ENCODE measurements at regions of chr5 and their contacts with region 1.

Region 1: DNA sequence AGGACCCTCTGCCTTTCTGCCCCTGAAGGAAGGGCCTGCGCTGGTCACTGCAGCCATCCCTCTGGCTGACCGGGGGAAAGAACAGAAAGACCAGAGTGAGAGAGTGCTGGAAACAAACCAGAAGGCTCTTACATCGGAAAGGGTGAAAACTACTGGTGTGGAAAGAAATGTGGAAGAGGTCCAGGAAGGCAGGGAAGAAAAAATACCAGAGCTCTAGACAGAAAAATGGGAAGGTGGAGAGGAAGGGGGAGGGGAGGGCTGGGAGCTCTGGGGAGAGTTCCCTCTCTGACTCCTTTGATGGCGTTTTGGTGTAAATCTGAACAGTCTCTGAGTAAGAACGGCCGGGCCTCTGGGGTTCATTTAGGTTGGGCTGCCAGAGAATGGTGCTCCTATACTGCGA is 47.7 kb downstream of the COL23A1 start:
- DNase-seq: no peak
- ATAC-seq: peak; percentile 30

Region 2: GRCh38 chr5:178428341-178428964 is 114.0 kb before region 1 on chr5:
- intact Hi-C with region 1: loop called (anchors 2 kb)
- DNase-seq: peak; percentile 84
- ATAC-seq: peak; percentile 92

Region 3: DNA sequence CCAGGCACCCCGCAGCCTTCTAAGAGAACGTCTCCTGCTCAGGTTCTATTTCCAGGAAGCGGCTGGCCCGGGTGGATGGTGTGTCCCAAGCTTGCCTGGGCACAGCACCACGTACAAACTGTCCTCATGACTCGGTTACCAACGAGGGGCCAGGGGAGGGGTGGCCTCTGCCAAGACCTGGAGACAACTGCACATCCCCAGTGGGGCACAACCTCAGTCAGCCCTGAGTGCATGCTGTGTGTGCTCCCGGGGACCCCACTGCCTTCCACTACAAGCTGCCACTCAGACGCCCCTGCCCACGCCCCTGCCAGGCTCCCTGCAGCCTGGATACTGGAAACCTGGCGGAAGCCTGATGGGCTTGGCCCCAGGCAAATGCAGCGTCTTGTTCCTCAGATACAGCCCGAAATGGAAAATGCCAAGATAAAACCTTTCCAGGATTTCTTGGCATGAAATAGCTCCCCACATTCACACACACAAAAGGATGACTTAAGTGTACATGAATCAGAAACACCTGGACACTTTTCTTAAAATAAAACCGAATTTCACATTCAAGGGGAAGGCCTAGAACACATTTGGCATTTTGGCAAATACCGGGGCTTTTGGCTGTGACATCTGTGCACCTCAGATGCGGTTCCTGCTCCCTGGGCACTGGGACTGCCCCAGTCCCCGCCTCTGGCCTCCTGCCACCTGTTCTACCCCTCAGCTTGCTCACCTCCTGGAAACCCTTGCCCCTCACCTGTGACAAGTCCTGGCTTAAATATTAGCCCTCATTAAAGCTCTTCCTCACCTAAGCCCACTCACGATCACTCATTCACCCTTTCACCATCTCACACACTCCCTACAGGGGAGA is 14.8 kb before region 1 on chr5:
- intact Hi-C with region 1: loop called (anchors 1 kb)
- DNase-seq: peak; percentile 85
- ATAC-seq: peak; percentile 93

Measured in Right ventricle myocardium inferior (tissue), 1 donor.